ENCODE measurements at regions of chr7 and their contacts with region 1.

Region 1: GRCh38 chr7:152383341-152384234 is 52.2 kb downstream of the KMT2C start:
- DNase-seq: no peak
- H3K4me3 ChIP-seq: no peak overlapping the region
- H3K27ac ChIP-seq: no peak overlapping the region
- H3K4me1 ChIP-seq: no peaks in the 10 kb centered on the region
- H3K27me3 ChIP-seq: no peaks in the 10 kb centered on the region
- CTCF ChIP-seq: no peak
- POLR2A ChIP-seq: no peak

Region 2: DNA sequence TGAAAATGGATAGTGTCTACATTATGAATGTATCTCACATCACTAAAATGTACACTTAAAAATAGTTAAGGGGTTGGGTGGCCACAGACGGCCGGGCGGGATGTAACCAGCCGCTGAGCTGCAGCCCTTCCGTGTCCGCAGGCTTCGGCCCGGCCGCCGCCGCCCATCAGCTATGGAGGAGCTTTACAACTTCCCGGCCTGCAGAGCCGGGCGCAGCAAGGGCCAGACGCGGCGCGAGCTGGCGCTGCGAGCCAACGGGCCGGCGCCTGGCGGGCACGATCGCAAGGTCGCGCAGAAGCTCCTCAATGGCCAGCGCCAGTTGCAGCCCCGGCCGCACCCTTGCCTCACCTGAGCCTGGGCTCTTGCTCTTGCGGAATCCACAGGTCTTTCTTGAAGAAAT is 16.9 kb before region 1 on chr7:
- intact Hi-C with region 1: no loop called
- DNase-seq: no peak
- H3K4me3 ChIP-seq: peak overlapping the region in 1 of 3 donors; percentile 15
- H3K27ac ChIP-seq: no peak overlapping the region
- H3K4me1 ChIP-seq: no peaks in the 10 kb centered on the region
- H3K27me3 ChIP-seq: no peaks in the 10 kb centered on the region
- CTCF ChIP-seq: no peak
- POLR2A ChIP-seq: no peak

Region 3: DNA sequence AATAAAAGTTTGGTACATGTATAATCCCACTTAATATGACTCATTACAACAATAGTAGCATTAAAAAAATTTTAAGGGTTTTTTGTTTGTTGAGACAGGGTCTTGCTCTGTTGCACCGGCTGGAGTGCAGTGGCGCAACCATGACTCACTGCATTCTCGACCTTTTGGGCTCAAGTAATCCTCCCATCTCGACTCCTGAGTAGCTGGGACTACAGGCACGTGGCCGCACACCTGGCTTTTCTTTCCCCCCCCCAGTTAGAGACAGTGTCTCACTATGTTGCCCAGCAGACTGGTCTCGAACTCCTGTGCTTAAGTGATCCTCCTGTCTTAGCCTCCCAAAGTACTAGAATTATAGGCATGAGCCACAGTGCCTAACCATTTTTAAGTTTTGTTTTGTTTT is 11.5 kb after region 1 on chr7:
- intact Hi-C with region 1: loop called (anchors 2 kb)
- DNase-seq: no peak
- H3K4me3 ChIP-seq: no peak overlapping the region
- H3K27ac ChIP-seq: no peak overlapping the region
- H3K4me1 ChIP-seq: no peaks in the 10 kb centered on the region
- H3K27me3 ChIP-seq: no peaks in the 10 kb centered on the region
- CTCF ChIP-seq: no peak
- POLR2A ChIP-seq: no peak